Panc1 (cell line): ENCODE measurements at regions of chr1 and their contacts with region 1.

Region 1: DNA sequence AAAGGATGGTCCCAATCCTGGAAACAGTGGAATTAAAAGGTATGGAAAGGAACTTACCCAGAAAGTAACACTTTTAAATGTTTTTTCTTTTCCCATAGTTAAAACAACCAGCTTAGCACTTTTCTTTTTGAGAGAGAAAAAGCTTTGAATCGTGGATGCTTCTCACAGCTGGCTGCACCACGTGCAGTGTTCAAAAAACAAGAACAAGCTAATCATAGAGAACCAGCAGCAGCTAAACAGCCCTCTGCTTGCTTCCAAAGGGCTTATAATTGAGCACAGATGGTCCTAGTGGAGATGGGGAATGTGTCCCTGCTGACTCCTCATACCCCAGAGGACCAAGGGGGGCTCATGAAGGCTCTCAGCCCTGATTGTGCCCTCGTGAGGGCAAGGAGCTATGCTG is 26.4 kb downstream of the UTP25 start:
- DNase-seq: no peak
- ATAC-seq: no peak
- H3K4me3 ChIP-seq: no peak overlapping the region
- H3K27ac ChIP-seq: no peak overlapping the region
- H3K4me1 ChIP-seq: no peaks in the 10 kb centered on the region
- H3K27me3 ChIP-seq: no peaks in the 10 kb centered on the region
- CTCF ChIP-seq: no peak

Region 2: GRCh38 chr1:210214573-210215409 is 360.6 kb after region 1 on chr1:
- CTCF ChIA-PET with region 1: no interaction called
- POLR2A ChIA-PET with region 1: no interaction called
- in situ Hi-C with region 1: no loop called
- intact Hi-C with region 1: no loop called
- DNase-seq: no peak
- ATAC-seq: no peak
- H3K4me3 ChIP-seq: no peak overlapping the region
- H3K27ac ChIP-seq: no peak overlapping the region
- H3K4me1 ChIP-seq: no peaks in the 10 kb centered on the region
- H3K27me3 ChIP-seq: no peaks in the 10 kb centered on the region
- CTCF ChIP-seq: no peak

Region 3: GRCh38 chr1:211267204-211267857 is 1413.1 kb after region 1 on chr1:
- CTCF ChIA-PET with region 1: interaction called, 10 read pairs
- POLR2A ChIA-PET with region 1: no interaction called
- in situ Hi-C with region 1: no loop called
- intact Hi-C with region 1: no loop called
- DNase-seq: no peak
- ATAC-seq: no peak
- H3K4me3 ChIP-seq: no peak overlapping the region
- H3K27ac ChIP-seq: no peak overlapping the region
- H3K4me1 ChIP-seq: no peaks in the 10 kb centered on the region
- H3K27me3 ChIP-seq: no peaks in the 10 kb centered on the region
- CTCF ChIP-seq: no peak